Activated T-helper 1 cell treated with anti-CD3 and anti-CD28 coated beads, Interleukin-12 subunit alpha, Interleukin-12 subunit beta, Interleukin-2, Interleukin-4 antibody, amounts not matched to agents 30 ng/mL and 10 ng/mL and 1 ng/mL, durations not matched to agents 14 hours and 24 hours and 36 hours (primary cell): ENCODE measurements at regions of chr5 and their contacts with region 1.

Region 1: DNA sequence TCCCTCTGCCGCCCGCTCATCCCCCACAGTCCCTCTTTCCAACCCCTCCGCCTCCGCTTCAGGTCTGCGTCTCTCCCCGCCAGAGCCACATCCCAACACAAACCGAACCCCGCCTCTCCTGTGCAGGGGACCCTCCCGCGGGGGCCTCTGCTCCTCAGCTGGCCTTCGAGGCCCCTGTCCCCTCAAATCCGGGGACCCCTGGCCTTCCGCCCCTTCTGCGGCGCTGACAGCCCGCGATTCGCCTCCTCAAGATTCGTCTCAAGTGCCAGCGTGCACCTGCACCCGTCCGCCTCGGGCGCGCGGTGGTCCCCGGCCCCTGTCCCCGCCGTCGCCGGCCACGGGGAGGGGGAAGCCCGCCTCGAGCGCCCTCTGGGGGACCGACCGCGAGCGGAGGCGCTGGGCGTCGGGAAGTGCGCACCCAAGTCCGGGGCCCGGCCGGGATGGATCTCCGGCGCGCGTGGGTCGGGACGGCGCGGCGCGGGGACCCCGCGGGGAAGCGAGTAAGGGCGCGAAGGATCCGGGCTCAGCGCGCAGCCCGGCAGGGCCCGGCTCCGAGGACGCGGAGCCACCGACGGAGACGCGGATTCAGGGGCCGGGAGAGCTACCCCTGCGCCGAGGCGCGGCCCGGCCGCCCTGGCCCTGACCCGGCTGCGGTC is 631 bp downstream of the FLT4 start:
- DNase-seq: no peak
- H3K4me3 Mint-ChIP-seq: peak overlapping the region; percentile 77
- H3K27ac Mint-ChIP-seq: no peak overlapping the region
- H3K4me1 Mint-ChIP-seq: peaks cover 10% of the 10 kb centered on the region
- H3K27me3 Mint-ChIP-seq: peaks cover 38% of the 10 kb centered on the region

Region 2: GRCh38 chr5:180470966-180471582 is 177.7 kb before region 1 on chr5:
- intact Hi-C with region 1: no loop called
- DNase-seq: peak; percentile 20
- H3K4me3 Mint-ChIP-seq: no peak overlapping the region
- H3K27ac Mint-ChIP-seq: no peak overlapping the region
- H3K4me1 Mint-ChIP-seq: no peaks in the 10 kb centered on the region
- H3K27me3 Mint-ChIP-seq: peaks cover 7% of the 10 kb centered on the region

Region 3: GRCh38 chr5:180611140-180611850 is 37.5 kb before region 1 on chr5:
- intact Hi-C with region 1: no loop called
- DNase-seq: no peak
- H3K4me3 Mint-ChIP-seq: no peak overlapping the region
- H3K27ac Mint-ChIP-seq: no peak overlapping the region
- H3K4me1 Mint-ChIP-seq: no peaks in the 10 kb centered on the region
- H3K27me3 Mint-ChIP-seq: no peaks in the 10 kb centered on the region

Region 4: GRCh38 chr5:180658774-180659564 is 10.2 kb after region 1 on chr5:
- intact Hi-C with region 1: loop called (anchors 1 kb)
- DNase-seq: no peak
- H3K4me3 Mint-ChIP-seq: no peak overlapping the region
- H3K27ac Mint-ChIP-seq: no peak overlapping the region
- H3K4me1 Mint-ChIP-seq: no peaks in the 10 kb centered on the region
- H3K27me3 Mint-ChIP-seq: peaks cover 25% of the 10 kb centered on the region

Region 5: GRCh38 chr5:180689071-180689694 is 40.4 kb after region 1 on chr5:
- intact Hi-C with region 1: loop called (anchors 2 kb)
- DNase-seq: peak; percentile 21
- H3K4me3 Mint-ChIP-seq: peak overlapping the region; percentile 51
- H3K27ac Mint-ChIP-seq: peak overlapping the region; percentile 45
- H3K4me1 Mint-ChIP-seq: peaks cover 21% of the 10 kb centered on the region
- H3K27me3 Mint-ChIP-seq: no peaks in the 10 kb centered on the region